ENCODE measurements at regions of chr2 and their contacts with region 1.

Region 1: DNA sequence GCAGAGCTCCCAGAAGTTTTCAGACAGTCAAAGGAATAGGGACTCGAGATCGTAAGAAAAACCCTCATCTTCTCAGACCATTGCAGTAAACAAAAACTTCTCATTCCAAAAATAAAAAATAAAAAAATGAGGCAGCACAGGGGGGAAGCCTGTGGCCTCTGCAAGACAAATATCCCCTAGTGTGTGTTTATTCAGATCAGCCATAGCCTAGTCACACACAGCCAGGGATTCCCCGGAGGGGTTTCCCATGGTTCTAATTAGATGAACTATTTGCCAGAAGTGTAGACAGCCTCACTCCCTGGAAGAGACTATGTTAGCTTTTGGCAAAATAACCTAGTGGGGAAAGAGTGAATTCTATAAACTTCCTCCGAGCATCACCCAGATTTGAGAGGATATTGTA is 122.9 kb upstream of the KLF7 start:
- DNase-seq: no peak
- H3K4me3 Mint-ChIP-seq: no peak overlapping the region
- H3K27ac Mint-ChIP-seq: no peak overlapping the region
- H3K4me1 Mint-ChIP-seq: peaks cover 77% of the 10 kb centered on the region
- H3K27me3 Mint-ChIP-seq: no peaks in the 10 kb centered on the region

Region 2: GRCh38 chr2:206881708-206882410 is 406.8 kb before region 1 on chr2:
- intact Hi-C with region 1: no loop called
- DNase-seq: no peak
- H3K4me3 Mint-ChIP-seq: no peak overlapping the region
- H3K27ac Mint-ChIP-seq: no peak overlapping the region
- H3K4me1 Mint-ChIP-seq: no peaks in the 10 kb centered on the region
- H3K27me3 Mint-ChIP-seq: peaks cover 8% of the 10 kb centered on the region

Region 3: DNA sequence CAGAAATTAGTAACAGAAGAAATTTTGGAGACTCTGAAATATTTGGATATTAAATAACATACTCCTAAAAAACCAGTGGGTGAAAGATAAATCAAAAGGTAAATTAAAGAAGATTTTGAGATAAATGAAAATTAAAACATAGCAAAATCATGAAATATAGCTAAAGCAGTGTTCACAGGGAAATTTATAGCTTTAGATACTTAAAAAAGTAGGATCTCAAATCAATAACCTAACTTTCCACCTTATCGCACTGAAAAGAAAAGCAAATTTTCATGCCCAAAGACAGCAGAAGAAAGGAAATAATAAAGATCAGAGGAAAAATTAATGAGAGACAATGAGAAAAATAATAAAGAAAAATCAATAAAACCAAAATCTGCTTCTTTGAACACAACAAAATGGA is 12.2 kb after region 1 on chr2:
- intact Hi-C with region 1: no loop called
- DNase-seq: no peak
- H3K4me3 Mint-ChIP-seq: no peak overlapping the region
- H3K27ac Mint-ChIP-seq: no peak overlapping the region
- H3K4me1 Mint-ChIP-seq: no peaks in the 10 kb centered on the region
- H3K27me3 Mint-ChIP-seq: no peaks in the 10 kb centered on the region

Region 4: GRCh38 chr2:207311316-207312005 is 22.8 kb after region 1 on chr2:
- intact Hi-C with region 1: loop called (anchors 1 kb)
- DNase-seq: no peak
- H3K4me3 Mint-ChIP-seq: no peak overlapping the region
- H3K27ac Mint-ChIP-seq: peak overlapping the region; percentile 88
- H3K4me1 Mint-ChIP-seq: peaks cover 49% of the 10 kb centered on the region
- H3K27me3 Mint-ChIP-seq: no peaks in the 10 kb centered on the region

Region 5: DNA sequence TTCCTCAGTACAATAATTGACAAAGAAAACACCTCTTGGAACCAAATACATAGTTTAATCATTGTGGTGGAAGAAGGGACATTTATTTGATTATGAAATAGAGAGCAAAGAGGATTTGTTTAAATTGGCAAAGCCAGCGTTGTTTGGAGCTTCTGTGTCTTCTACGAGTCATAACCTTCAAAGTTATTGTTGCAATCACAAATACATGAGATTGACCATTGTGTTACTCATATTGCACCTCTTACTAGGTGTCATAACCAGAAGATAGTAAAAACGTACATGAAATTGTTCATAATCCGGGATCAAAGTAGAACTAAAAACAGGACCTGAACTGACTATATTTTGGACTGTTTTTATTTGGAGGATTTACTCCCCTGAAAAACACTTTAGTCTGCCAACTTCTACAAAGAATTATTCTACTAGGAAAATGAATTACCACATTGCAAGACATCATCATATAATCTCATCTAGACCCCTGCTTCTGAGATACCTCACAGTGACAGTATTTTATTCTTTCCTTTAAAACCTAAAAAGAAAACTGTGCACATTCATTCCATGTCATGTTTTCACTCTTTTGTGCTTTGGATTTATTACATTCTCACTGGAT is 28.9 kb after region 1 on chr2:
- intact Hi-C with region 1: loop called (anchors 1 kb)
- DNase-seq: no peak
- H3K4me3 Mint-ChIP-seq: no peak overlapping the region
- H3K27ac Mint-ChIP-seq: peak overlapping the region; percentile 33
- H3K4me1 Mint-ChIP-seq: peaks cover 50% of the 10 kb centered on the region
- H3K27me3 Mint-ChIP-seq: no peaks in the 10 kb centered on the region